Activated B cell treated with CpG ODN at 0.5 μM for 24 hours (primary cell): ENCODE measurements at regions of chr10 and their contacts with region 1.

Region 1: GRCh38 chr10:100433253-100434240 is 29.3 kb upstream of the WNT8B start:
- DNase-seq: peak; percentile 80
- ATAC-seq: peak; percentile 99
- H3K4me3 Mint-ChIP-seq: no peak overlapping the region
- H3K27ac Mint-ChIP-seq: no peak overlapping the region
- H3K4me1 Mint-ChIP-seq: no peaks in the 10 kb centered on the region
- H3K27me3 Mint-ChIP-seq: peaks cover 8% of the 10 kb centered on the region
- CTCF ChIP-seq: peak; percentile 99

Region 2: GRCh38 chr10:100254191-100254590 is 179.4 kb before region 1 on chr10:
- CTCF ChIA-PET with region 1: no interaction called
- POLR2A ChIA-PET with region 1: interaction called, 10 read pairs
- intact Hi-C with region 1: no loop called
- DNase-seq: no peak
- ATAC-seq: no peak
- H3K4me3 Mint-ChIP-seq: no peak overlapping the region
- H3K27ac Mint-ChIP-seq: no peak overlapping the region
- H3K4me1 Mint-ChIP-seq: no peaks in the 10 kb centered on the region
- H3K27me3 Mint-ChIP-seq: no peaks in the 10 kb centered on the region
- CTCF ChIP-seq: no peak

Region 3: DNA sequence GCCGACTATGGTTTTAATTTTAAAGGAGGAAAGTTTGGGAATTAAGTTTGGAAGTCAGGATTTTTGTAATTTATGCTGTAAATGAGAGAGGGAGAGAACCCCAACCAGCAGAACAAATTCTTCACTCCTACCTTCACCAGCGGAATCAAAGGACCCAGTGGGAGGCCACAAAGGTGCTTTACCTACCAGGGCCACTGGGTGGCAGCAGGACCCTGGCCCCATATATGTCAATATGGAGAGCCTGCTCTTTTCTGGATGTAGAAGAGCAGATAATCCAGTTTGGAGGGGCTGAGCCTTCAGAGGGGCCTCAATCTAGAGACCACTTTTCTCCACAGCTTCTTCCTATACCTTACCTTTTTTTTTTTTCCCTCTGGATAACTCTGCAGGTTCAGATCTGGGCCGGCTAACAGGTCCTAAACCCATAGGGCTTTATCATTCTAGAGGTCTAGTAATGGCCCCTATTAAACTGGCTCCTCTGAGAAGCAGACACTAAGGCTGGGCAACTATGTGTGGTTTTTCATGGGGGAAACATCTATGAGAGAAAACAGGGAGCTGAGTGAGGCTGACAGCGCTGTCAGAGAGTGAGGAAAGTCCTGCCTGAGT is 95.0 kb before region 1 on chr10:
- CTCF ChIA-PET with region 1: interaction called, 66 read pairs
- POLR2A ChIA-PET with region 1: interaction called, 5 read pairs
- intact Hi-C with region 1: loop called (anchors 1 kb)
- DNase-seq: peak; percentile 64
- ATAC-seq: peak; percentile 87
- H3K4me3 Mint-ChIP-seq: peak overlapping the region; percentile 24
- H3K27ac Mint-ChIP-seq: peak overlapping the region; percentile 19
- H3K4me1 Mint-ChIP-seq: peaks cover 25% of the 10 kb centered on the region
- H3K27me3 Mint-ChIP-seq: peaks cover 3% of the 10 kb centered on the region
- CTCF ChIP-seq: no peak

Region 4: GRCh38 chr10:100508691-100509150 is 75.2 kb after region 1 on chr10:
- CTCF ChIA-PET with region 1: interaction called, 5 read pairs
- POLR2A ChIA-PET with region 1: no interaction called
- intact Hi-C with region 1: loop called (anchors 1 kb)
- DNase-seq: no peak
- ATAC-seq: peak; percentile 68
- H3K4me3 Mint-ChIP-seq: no peak overlapping the region
- H3K27ac Mint-ChIP-seq: no peak overlapping the region
- H3K4me1 Mint-ChIP-seq: no peaks in the 10 kb centered on the region
- H3K27me3 Mint-ChIP-seq: no peaks in the 10 kb centered on the region
- CTCF ChIP-seq: no peak